Endothelial cell of umbilical vein (primary cell): ENCODE measurements at regions of chr20 and their contacts with region 1.

Region 1: DNA sequence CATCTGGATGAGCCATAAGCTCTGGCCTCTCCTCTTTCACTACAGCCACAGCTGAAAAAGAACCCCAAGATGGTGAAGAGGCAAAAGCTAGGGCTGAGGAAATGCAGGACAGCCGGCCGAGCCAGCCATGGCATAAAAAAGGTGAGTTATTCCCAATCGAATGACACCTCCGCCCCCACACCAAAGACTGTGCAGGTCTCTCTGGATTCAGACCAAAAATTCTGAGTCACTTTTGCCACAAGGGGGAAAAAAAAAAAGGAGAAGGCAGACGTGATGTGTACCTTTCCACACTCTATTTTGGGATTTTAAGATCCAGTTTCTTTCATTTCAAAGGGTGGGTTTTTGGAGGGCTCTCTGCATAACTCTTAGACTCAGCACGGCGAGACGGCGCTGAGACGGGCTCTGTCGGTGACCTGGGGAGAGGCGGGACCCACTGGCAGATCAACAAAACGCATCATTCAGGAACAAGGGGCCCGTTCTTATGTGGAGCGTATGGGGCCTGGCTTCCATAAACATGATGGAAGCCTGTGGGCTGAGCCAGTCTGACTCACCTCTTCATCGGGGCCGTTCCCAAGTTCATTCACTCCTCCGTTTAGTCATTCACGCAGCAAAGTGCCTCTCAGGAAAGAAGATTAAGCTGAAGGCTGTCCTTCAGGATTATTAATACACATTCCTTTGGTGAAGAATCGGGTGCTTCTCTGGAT is 54.8 kb downstream of the NFATC2 start:
- DNase-seq: peak; percentile 50
- H3K4me3 ChIP-seq: no peak overlapping the region
- H3K27ac ChIP-seq: peak overlapping the region; percentile 15
- H3K4me1 ChIP-seq: peaks cover 23% of the 10 kb centered on the region
- H3K27me3 ChIP-seq: no peaks in the 10 kb centered on the region
- CTCF ChIP-seq: no peak
- POLR2A ChIP-seq: no peak

Region 2: DNA sequence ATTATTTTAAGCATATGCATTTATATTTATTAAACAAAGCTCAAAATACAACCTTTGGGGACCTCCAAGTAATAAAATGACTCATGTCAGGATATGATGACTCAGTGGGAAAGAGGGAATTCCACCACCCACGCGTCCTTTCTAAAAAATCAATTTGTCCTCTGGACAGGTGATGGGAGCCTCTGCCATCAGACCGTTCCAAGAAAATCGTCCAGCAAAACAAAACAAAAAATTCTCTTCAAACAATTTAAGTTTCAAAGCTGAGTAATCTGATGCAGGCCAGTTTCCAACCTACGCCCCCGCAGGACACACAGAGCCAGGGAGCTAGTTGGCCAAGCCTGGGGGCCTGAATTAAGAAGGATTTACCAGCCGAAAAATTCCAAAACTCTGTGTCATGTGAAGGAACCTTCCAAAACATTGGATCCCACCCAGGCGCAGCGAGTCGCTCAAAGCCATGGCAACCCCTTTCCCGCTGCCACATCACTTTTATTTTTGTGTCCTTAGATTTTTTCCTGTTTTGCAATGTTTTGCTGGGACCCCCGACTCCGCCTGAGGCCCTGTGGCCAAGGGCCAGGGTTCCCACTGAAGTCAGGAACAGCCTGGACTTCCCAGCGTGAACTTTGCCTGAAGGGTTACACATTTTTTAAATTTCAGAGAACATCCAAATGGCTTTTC is 40.5 kb before region 1 on chr20:
- CTCF ChIA-PET with region 1: no interaction called
- POLR2A ChIA-PET with region 1: interaction called, 3 read pairs
- dilution Hi-C with region 1: no loop called
- intact Hi-C with region 1: loop called (anchors 1 kb)
- DNase-seq: peak; percentile 95
- H3K4me3 ChIP-seq: peak overlapping the region in 1 of 3 experiments; percentile 3
- H3K27ac ChIP-seq: peak overlapping the region; percentile 83
- H3K4me1 ChIP-seq: peaks cover 20% of the 10 kb centered on the region
- H3K27me3 ChIP-seq: no peaks in the 10 kb centered on the region
- CTCF ChIP-seq: no peak
- POLR2A ChIP-seq: no peak

Region 3: GRCh38 chr20:51456511-51457509 is 30.9 kb before region 1 on chr20:
- CTCF ChIA-PET with region 1: interaction called, 3 read pairs
- POLR2A ChIA-PET with region 1: interaction called, 4 read pairs
- dilution Hi-C with region 1: no loop called
- intact Hi-C with region 1: loop called (anchors 1 kb)
- DNase-seq: peak; percentile 99
- H3K4me3 ChIP-seq: no peak overlapping the region
- H3K27ac ChIP-seq: peak overlapping the region; percentile 71
- H3K4me1 ChIP-seq: peaks cover 15% of the 10 kb centered on the region
- H3K27me3 ChIP-seq: no peaks in the 10 kb centered on the region
- CTCF ChIP-seq: no peak
- POLR2A ChIP-seq: no peak

Region 4: GRCh38 chr20:51525241-51526129 is 37.8 kb after region 1 on chr20:
- CTCF ChIA-PET with region 1: interaction called, 3 read pairs
- POLR2A ChIA-PET with region 1: no interaction called
- dilution Hi-C with region 1: no loop called
- intact Hi-C with region 1: loop called (anchors 5 kb)
- DNase-seq: peak; percentile 45
- H3K4me3 ChIP-seq: no peak overlapping the region
- H3K27ac ChIP-seq: no peak overlapping the region
- H3K4me1 ChIP-seq: peaks cover 10% of the 10 kb centered on the region
- H3K27me3 ChIP-seq: no peaks in the 10 kb centered on the region
- CTCF ChIP-seq: no peak
- POLR2A ChIP-seq: no peak

Region 5: DNA sequence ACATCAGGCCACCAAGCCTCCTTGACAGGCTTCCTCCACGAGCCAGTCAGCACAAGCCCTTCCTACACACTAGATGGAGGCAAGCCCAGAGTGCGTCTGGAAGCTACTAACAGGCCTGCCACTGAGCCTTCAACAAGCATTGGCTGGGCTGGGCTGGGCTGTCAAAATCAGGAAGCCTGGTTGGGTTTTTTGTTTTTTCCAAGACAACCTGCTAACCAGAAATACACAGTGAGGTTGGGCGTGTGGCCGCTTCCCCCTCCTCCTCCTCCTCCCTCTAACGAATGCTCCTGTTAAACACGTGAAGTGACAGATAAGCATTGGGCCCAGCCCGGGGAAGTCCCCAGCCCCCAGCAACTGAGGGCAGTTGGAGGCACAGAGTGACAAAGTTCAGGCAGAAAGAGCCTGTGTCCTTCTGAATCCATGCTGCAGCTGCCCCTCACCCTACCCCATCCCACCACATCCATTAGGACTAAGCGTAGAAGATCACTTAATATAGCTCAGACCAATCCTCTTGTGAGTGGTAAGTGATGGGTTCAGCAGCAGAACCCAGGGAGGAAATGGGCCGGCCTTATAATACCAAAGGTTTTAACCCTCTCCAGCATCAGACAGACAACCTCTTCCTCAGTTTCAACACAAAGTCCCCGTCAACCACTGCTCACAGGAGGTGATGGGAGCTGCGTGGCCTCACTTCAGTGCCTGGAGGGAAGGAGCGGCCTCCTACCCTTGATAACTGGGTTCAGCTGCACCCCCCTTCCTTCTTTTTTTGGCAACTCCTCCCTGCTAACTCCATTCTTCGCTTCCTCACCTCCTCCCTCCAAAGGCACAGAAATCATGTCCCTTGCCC is 53.7 kb after region 1 on chr20:
- CTCF ChIA-PET with region 1: interaction called, 4 read pairs
- POLR2A ChIA-PET with region 1: no interaction called
- dilution Hi-C with region 1: no loop called
- intact Hi-C with region 1: loop called (anchors 1 kb)
- DNase-seq: peak; percentile 85
- H3K4me3 ChIP-seq: peak overlapping the region in 2 of 3 experiments; percentile 36 to 47
- H3K27ac ChIP-seq: peak overlapping the region; percentile 42
- H3K4me1 ChIP-seq: peaks cover 25% of the 10 kb centered on the region
- H3K27me3 ChIP-seq: no peaks in the 10 kb centered on the region
- CTCF ChIP-seq: no peak
- POLR2A ChIP-seq: no peak